ENCODE measurements at regions of chr3 and their contacts with region 1.

Region 1: GRCh38 chr3:5426094-5426883 is 238.8 kb downstream of the EDEM1 start:
- H3K4me3 ChIP-seq: no peak overlapping the region
- H3K27ac ChIP-seq: no peak overlapping the region
- H3K4me1 ChIP-seq: no peaks in the 10 kb centered on the region
- CTCF ChIP-seq: peak; percentile 42

Region 2: DNA sequence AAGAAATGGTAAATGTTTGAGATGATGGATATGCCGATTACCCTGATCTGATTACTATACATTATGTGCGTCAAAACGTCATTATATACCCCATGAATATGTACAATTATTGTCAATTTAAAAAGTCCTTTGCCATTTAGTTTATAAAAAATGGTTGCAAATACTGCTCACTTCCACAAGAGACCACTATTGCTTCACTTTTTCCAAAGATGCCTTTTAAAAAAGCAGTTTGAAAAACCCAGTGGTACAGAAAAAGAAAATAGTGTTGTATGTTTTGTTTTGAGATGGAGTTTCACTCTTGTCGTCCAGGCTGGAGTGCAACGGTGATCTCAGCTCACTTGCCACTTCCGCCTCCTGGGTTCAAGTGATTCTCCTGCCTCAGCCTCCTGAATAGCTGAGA is 199.5 kb before region 1 on chr3:
- CTCF ChIA-PET with region 1: no interaction called
- POLR2A ChIA-PET with region 1: no interaction called
- H3K4me3 ChIP-seq: no peak overlapping the region
- H3K27ac ChIP-seq: no peak overlapping the region
- H3K4me1 ChIP-seq: no peaks in the 10 kb centered on the region
- CTCF ChIP-seq: 0 out of 2 replicates have a peak, but pooled peaks have one; percentile 12

Region 3: GRCh38 chr3:5437783-5438323 is 11.6 kb after region 1 on chr3:
- CTCF ChIA-PET with region 1: interaction called, 10 read pairs
- POLR2A ChIA-PET with region 1: no interaction called
- H3K4me3 ChIP-seq: no peak overlapping the region
- H3K27ac ChIP-seq: no peak overlapping the region
- H3K4me1 ChIP-seq: no peaks in the 10 kb centered on the region
- CTCF ChIP-seq: no peak

Region 4: DNA sequence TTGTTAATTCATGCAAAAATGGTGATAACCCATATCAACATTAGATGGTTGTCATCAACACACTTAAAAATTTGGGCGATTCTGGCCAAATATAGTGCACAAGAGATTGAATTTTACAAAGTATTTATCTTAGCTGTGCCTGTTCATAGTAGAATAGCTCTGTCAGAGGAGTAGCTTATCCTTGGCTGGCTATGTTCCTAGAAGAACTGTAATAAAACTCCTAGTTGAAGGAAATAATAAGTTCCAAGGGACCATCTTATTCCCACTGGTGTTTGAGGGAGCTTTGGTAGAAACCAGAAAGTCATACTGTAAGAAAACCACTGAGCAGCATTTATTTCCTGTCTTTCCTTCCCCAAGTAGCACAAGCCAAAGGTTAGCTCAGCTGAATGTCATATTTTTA is 1636.4 kb after region 1 on chr3:
- CTCF ChIA-PET with region 1: interaction called, 12 read pairs
- POLR2A ChIA-PET with region 1: no interaction called
- H3K4me3 ChIP-seq: no peak overlapping the region
- H3K27ac ChIP-seq: no peak overlapping the region
- H3K4me1 ChIP-seq: no peaks in the 10 kb centered on the region
- CTCF ChIP-seq: no peak

Measured in HEK293 (cell line).